AG04449 (cell line): ENCODE measurements at regions of chr10 and their contacts with region 1.

Region 1: GRCh38 chr10:30359373-30360206 is 10.5 kb upstream of the MTPAP start:
- DNase-seq: no peak
- H3K4me3 ChIP-seq: no peak overlapping the region
- CTCF ChIP-seq: peak; percentile 90

Region 2: GRCh38 chr10:30348378-30348776 is 11.2 kb before region 1 on chr10:
- CTCF ChIA-PET with region 1: interaction called, 40 read pairs
- POLR2A ChIA-PET with region 1: no interaction called
- DNase-seq: no peak
- H3K4me3 ChIP-seq: peak overlapping the region; percentile 91
- CTCF ChIP-seq: no peak

Region 3: DNA sequence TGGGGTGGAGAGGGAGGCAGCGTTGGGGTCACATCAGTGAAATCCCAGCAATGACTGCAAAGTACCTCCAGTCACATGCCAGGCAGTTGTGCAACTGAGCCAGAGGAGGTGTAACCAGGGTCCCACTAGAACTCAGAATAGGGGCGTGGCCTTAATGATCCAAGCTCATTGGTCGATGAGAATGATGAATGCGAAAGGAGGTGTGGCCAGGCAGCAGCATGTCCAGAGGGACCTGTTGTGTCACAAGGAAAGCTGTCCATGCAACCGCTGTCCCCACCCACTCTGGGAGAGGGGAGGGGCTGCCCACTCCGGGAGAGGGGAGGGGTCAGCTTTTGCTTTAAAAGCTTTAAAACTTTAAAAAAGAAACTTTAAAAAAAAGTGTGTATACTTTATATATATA is 14.8 kb after region 1 on chr10:
- CTCF ChIA-PET with region 1: interaction called, 56 read pairs
- POLR2A ChIA-PET with region 1: no interaction called
- DNase-seq: no peak
- H3K4me3 ChIP-seq: no peak overlapping the region
- CTCF ChIP-seq: no peak